Dendritic cell treated with granulocyte-macrophage colony-stimulating factor and Interleukin-4, amounts not matched to agents 40 ng/mL and 50 ng/mL, for 4 days (primary cell): ENCODE measurements at regions of chr13 and their contacts with region 1.

Region 1: GRCh38 chr13:112873851-112874750 is 94.9 kb upstream of the MCF2L start:
- H3K4me3 Mint-ChIP-seq: no peak overlapping the region
- H3K27ac Mint-ChIP-seq: no peak overlapping the region
- H3K4me1 Mint-ChIP-seq: peaks cover 10% of the 10 kb centered on the region
- H3K27me3 Mint-ChIP-seq: peaks cover 14% of the 10 kb centered on the region

Region 2: GRCh38 chr13:112638157-112638750 is 235.8 kb before region 1 on chr13:
- intact Hi-C with region 1: loop called (anchors 1 kb)
- H3K4me3 Mint-ChIP-seq: no peak overlapping the region
- H3K27ac Mint-ChIP-seq: no peak overlapping the region
- H3K4me1 Mint-ChIP-seq: peaks cover 5% of the 10 kb centered on the region
- H3K27me3 Mint-ChIP-seq: peaks cover 36% of the 10 kb centered on the region

Region 3: GRCh38 chr13:112990783-112991182 is 116.7 kb after region 1 on chr13:
- intact Hi-C with region 1: no loop called
- H3K4me3 Mint-ChIP-seq: no peak overlapping the region
- H3K27ac Mint-ChIP-seq: no peak overlapping the region
- H3K4me1 Mint-ChIP-seq: no peaks in the 10 kb centered on the region
- H3K27me3 Mint-ChIP-seq: peaks cover 7% of the 10 kb centered on the region

Region 4: DNA sequence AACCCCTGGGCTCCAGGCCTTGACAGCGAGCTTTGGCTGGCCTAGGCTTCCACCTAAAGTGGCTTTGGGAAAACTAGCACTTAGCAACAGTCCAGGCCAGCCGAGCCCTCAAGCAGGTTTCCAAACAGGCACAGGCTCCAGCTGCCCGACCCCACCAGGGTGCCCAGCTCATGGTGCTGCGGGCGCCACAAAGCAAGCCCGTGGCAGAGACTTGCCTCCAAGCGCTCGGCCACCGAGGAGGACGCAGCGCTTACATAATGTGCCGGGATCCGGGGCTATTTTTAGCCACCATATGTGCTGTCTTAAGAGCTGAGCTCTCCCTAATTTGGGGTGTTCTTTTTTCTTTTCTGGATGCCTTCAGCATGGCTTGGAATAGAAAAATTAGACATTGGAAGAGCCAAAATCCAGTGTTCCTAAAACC is 175.4 kb after region 1 on chr13:
- intact Hi-C with region 1: no loop called
- H3K4me3 Mint-ChIP-seq: no peak overlapping the region
- H3K27ac Mint-ChIP-seq: no peak overlapping the region
- H3K4me1 Mint-ChIP-seq: no peaks in the 10 kb centered on the region
- H3K27me3 Mint-ChIP-seq: no peaks in the 10 kb centered on the region